ENCODE measurements at regions of chr7 and their contacts with region 1.

Region 1: DNA sequence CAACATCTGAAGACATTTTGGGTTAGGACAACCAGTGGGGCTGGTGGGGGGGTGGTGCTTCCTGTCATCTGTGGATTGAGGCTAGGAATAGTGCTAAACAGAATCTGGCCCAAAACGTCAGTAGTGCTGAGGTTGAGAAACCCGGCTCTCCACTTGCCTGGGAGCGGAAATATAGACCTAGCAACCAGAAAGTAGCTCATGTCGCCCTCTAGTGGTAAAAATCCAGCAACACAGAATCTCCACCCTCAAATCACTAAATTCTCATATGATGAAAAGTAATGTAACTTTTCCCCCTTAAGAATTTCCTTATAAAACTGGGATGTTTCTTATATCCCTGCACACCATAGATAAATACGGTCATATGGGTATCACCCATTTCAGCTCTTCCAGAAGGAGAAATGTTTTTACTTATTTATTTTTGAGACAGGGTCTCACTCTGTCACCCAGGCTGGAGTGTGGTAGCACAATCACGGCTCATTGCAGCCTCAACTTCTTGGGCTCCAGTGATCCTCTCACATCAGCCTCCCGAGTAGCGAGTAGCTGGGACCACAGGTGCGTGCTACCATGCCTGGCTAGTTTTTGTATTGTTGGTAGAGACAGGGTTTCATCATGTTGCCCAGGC is 34.4 kb downstream of the ZC3HAV1 start:
- DNase-seq: peak; percentile 53
- ATAC-seq: peak; percentile 87
- H3K4me3 Mint-ChIP-seq: no peak overlapping the region
- H3K27ac Mint-ChIP-seq: peak overlapping the region; percentile 20; the same call in 1 of the 2 replicates
- H3K4me1 Mint-ChIP-seq: no peaks in the 10 kb centered on the region
- H3K27me3 Mint-ChIP-seq: no peaks in the 10 kb centered on the region
- CTCF ChIP-seq: peak; percentile 70

Region 2: GRCh38 chr7:138907850-138908249 is 167.3 kb before region 1 on chr7:
- CTCF ChIA-PET with region 1: interaction called, 10 read pairs
- POLR2A ChIA-PET with region 1: no interaction called
- DNase-seq: no peak
- ATAC-seq: peak; percentile 64
- H3K4me3 Mint-ChIP-seq: no peak overlapping the region
- H3K27ac Mint-ChIP-seq: peak overlapping the region; percentile 57; the same call in 1 of the 2 replicates
- H3K4me1 Mint-ChIP-seq: peaks cover 5% of the 10 kb centered on the region
- H3K27me3 Mint-ChIP-seq: no peaks in the 10 kb centered on the region
- CTCF ChIP-seq: no peak

Region 3: DNA sequence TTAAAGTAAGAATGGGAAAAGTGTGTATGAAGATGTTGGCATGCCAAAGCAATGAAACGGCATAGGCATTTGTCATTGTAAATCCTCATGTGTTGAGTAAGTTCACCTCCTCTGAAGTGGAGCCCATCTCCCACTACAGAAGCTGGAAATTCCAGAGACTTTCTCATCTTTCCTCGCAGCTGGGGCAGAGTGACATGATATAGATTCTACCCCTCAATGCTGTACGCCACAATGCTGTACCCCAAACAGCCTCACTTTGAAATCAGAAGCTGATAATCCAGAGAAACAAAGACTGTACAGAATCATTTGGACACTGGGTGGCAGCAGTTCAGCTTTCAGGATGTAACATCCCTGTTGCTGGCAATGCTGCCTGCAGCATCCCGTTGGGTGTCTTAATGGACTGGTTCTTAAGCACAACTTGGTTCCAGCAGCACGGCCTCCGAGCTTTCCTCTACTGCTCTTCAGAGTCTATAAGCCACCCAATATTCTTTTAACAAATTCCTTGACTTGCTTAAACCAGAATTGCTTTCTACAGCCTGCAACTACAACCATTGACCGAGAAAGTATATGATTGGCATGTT is 58.1 kb before region 1 on chr7:
- CTCF ChIA-PET with region 1: interaction called, 25 read pairs
- POLR2A ChIA-PET with region 1: no interaction called
- DNase-seq: peak; percentile 60
- ATAC-seq: peak; percentile 86
- H3K4me3 Mint-ChIP-seq: no peak overlapping the region
- H3K27ac Mint-ChIP-seq: no peak overlapping the region
- H3K4me1 Mint-ChIP-seq: peaks cover 25% of the 10 kb centered on the region
- H3K27me3 Mint-ChIP-seq: no peaks in the 10 kb centered on the region
- CTCF ChIP-seq: peak; percentile 22; the same call in 1 of the 2 replicates

Region 4: GRCh38 chr7:139058943-139059342 is 16.2 kb before region 1 on chr7:
- CTCF ChIA-PET with region 1: interaction called, 15 read pairs
- POLR2A ChIA-PET with region 1: no interaction called
- DNase-seq: no peak
- ATAC-seq: no peak
- H3K4me3 Mint-ChIP-seq: no peak overlapping the region
- H3K27ac Mint-ChIP-seq: no peak overlapping the region
- H3K4me1 Mint-ChIP-seq: no peaks in the 10 kb centered on the region
- H3K27me3 Mint-ChIP-seq: no peaks in the 10 kb centered on the region
- CTCF ChIP-seq: no peak

Region 5: DNA sequence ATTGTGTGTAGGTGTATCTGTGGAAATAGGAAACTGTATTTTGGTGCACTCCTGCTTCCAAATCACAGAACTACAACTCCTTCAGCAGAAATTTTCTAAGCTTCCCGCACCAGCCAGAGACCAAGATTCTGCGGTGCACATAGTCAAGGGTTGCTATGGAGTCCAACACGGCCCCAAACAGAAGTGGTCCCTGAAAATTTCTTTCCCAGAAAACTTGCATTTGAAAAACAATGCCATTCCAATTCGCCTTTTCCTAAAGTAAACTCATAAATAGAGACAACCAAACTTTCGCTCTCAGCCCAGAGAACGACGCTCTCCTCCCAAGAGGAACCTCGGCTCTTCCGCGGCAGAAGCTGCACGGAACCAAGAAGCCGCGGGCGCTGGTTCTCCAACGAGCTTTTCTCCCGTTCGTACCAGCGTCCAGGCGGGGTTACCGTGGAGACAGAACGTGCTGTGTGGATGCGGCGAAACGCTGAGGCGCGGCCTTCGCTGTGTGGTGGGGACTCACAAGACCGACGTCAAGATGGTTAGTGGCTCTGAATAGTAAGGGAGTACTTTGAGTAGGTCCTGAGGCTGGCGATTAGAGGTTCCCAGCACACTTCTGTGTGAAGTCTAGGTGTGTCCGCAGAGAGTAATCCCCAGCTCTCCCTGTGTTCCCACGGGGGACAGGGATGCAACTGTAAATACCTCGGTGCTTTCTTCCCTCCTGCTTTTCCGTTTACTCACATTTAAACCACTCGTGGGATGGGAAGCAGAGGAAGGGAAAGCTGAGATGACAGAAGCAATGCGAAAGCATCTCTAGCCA is 58.4 kb after region 1 on chr7:
- CTCF ChIA-PET with region 1: interaction called, 10 read pairs
- POLR2A ChIA-PET with region 1: no interaction called
- DNase-seq: peak; percentile 85
- ATAC-seq: peak; percentile 97
- H3K4me3 Mint-ChIP-seq: peak overlapping the region; percentile 81
- H3K27ac Mint-ChIP-seq: no peak overlapping the region
- H3K4me1 Mint-ChIP-seq: peaks cover 22% of the 10 kb centered on the region
- H3K27me3 Mint-ChIP-seq: no peaks in the 10 kb centered on the region; the same call in 1 of the 2 replicates
- CTCF ChIP-seq: no peak